Posterior vena cava (tissue), 2 donors: ENCODE measurements at regions of chr2 and their contacts with region 1.

Region 1: DNA sequence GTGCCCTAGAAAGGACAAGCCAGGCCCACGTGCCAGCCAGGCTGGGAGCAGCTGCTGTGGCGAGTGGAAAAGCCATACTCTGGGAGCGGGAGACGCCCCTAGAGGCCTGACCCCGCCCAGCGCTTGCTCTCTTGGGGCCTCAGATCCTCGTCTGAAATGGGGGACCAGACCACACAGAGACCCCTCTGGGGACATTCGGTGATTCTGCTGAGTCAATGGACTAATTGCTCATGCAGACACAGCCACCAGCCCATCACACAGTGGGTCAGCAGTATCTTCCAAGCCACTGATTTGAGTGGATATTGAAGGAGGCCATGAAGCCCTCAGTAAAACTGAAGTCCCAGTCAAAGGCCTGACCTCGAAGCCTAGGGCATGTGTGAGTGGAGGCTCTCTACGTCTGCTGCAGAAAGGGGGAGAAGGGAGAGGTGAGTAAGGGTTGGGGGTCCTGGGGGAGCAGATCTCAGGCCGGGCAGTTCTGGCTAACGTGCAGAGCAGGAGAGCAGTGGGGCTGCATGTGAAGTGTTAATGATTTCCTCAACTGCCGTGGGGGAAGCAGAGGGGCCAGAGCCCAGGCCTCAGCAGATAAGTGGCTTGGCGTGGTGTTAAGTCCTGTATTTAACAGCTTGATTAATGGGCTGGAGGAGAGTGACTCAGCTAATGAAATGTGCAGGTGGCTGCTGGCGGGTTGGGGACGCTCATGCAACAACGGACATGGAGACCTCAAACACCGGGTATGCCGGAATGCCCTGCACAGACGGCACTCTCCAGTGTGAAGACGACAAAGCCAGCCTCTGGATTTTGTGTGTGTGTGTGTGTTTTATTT is 104.4 kb upstream of the TWIST2 start:
- DNase-seq: no peak

Region 2: DNA sequence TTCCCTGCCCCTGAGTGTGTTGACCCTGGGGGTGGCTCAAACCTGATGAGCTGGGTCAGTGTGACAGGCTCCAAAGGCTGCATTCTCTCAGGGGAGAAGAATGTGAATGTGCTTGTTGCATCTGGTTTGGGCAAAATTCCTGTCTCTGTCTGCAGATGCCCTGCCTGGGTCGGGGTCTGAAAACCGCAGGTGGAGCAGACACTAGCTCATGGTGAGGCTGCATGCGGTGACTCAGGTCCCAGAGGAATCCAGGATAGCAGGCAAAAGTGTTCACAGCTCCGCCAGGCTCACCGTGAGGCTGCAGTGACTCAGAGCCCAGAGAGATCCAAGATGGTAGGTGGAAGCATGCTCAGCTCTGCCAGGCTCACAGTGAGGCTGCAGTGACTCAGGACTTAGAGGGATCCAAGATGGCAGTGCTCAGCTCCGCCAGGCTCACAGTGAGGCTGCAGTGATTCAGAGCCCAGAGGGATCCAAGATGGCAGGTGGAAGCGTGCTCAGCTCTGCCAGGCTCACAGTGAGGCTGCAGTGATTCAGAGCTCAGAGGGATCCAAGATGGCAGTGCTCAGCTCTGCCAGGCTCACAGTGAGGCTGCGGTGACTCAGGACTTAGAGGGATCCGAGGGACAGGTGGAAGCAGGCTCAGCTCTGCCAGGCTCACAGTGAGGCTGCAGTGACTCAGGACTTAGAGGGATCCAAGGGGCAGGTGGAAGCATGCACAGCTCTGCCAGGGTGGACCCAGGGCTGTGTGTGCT is 1973.4 kb before region 1 on chr2:
- intact Hi-C with region 1: loop called in 1 of 2 experiments (anchors 5 kb)
- DNase-seq: peak; percentile 66

Region 3: GRCh38 chr2:238528953-238529781 is 214.3 kb before region 1 on chr2:
- intact Hi-C with region 1: no loop called
- DNase-seq: peak; percentile 42

Region 4: DNA sequence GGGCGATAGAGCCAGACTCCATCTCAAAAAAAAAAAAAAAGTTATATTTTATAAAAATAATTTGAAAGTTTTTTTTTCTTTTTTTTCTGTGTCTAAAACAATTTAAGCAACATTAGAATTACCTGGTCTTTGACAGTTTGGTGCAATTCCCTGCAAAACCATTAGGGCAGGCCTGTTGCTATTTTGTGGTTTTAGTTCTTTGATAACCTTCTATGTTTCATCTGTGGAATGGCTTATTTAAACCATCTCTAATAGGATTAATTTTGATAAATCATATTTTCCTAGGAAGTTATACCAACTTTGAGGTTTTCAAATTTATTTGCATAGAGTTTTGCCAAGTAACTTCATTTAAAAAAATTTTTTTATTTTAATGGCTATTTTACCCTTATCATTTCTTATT is 36.8 kb before region 1 on chr2:
- intact Hi-C with region 1: loop called in 1 of 2 experiments (anchors 1 kb)
- DNase-seq: no peak

Region 5: DNA sequence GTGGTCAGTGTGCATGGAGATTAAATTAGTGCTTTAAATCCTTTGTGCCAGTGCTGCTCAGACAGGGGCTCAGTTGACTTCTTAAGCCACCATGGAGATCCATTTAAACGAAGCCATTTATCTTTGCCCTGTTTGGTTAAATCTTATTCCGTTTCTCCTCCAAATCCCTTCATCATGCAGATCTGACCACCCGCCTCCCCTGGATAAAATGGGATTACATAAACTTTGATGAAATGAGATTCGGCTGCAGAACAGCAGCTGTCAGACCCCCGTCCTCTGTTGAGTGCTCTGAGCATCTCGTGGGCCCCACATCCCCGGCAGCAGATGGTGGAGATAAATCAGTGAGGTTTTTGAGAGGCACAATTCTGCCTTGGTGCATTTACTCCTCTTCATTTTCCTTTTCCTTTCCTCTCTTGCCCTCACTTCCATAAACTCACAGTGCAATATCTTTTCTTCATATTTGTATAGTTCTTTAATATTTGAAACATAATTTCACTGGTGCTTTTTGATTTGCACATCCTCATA is 20.1 kb after region 1 on chr2:
- intact Hi-C with region 1: no loop called
- DNase-seq: no peak

Region 6: GRCh38 chr2:238777369-238778067 is 34.1 kb after region 1 on chr2:
- intact Hi-C with region 1: loop called (anchors 5 to 10 kb)
- DNase-seq: no peak

Region 7: DNA sequence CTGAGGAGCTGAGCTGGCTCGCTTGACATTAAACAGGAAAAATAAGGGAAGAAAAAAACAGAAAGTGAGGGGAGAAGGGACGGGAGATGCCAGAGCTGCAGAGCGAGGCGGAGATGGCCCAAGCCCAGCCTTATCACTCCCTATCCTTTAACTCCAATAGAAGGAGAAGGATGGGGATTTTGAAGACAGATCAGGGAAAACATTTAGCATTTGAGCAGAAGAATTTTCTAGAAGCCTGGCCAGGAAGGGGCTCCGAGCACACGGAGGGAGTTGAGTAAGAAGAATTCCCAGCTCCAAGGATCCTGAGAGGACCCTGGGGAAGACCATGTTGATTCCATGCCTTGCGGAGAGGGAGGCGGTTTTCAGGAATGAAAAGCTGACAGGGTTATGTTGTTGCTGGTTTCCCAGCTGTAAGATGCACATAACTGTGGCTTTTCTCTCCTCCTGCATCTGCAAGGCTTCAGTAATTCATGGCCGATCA is 140.0 kb after region 1 on chr2:
- intact Hi-C with region 1: no loop called
- DNase-seq: peak; percentile 73